Activated CD4-positive, alpha-beta T cell treated with anti-CD3 and anti-CD28 coated beads for 36 hours (primary cell): ENCODE measurements at regions of chr12 and their contacts with region 1.

Region 1: DNA sequence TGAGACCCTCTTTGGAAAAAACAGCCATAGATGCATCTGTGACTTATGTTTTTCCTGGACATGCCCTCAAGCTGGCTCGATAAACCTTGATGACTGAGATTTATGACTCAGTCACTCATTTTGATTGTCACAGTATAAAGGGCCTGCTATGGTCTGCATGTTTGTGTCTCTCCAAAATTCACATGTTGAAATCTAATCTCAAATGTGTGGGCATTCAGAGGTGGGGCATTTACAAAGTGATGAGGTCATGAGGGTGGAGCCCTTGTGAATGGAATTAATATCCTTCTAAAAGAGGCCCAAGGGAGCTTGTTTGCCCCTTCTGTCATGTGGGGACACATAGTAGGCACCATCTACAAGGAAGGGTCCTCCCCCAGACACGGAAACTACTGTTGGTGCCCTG is 372.9 kb downstream of the APAF1 start:
- DNase-seq: no peak
- ATAC-seq: no peak
- H3K4me3 Mint-ChIP-seq: no peak overlapping the region
- H3K27ac Mint-ChIP-seq: no peak overlapping the region
- H3K4me1 Mint-ChIP-seq: no peaks in the 10 kb centered on the region
- H3K27me3 Mint-ChIP-seq: peaks cover 5% of the 10 kb centered on the region

Region 2: DNA sequence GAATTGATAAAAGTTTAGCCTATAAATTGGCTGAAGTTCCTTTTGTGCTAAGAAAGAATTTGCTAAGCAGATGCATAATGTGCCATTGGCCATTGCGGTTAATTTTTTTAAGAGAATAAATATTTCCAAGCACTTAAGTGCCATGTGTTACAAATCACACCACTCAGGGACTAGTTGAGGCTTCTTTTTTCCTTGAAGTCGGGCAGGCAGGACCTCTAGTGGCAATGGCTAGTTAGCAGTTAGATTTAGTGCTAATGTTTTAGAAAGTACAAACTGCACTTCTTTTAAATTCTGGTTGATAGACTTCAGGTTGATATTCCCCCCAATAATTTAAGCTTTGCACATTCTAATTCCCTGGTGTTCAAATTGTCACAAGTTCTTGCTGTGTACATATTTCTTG is 78.6 kb before region 1 on chr12:
- CTCF ChIA-PET with region 1: no interaction called
- POLR2A ChIA-PET with region 1: no interaction called
- intact Hi-C with region 1: no loop called
- DNase-seq: peak; percentile 23
- ATAC-seq: no peak
- H3K4me3 Mint-ChIP-seq: no peak overlapping the region
- H3K27ac Mint-ChIP-seq: no peak overlapping the region
- H3K4me1 Mint-ChIP-seq: no peaks in the 10 kb centered on the region
- H3K27me3 Mint-ChIP-seq: peaks cover 12% of the 10 kb centered on the region

Region 3: DNA sequence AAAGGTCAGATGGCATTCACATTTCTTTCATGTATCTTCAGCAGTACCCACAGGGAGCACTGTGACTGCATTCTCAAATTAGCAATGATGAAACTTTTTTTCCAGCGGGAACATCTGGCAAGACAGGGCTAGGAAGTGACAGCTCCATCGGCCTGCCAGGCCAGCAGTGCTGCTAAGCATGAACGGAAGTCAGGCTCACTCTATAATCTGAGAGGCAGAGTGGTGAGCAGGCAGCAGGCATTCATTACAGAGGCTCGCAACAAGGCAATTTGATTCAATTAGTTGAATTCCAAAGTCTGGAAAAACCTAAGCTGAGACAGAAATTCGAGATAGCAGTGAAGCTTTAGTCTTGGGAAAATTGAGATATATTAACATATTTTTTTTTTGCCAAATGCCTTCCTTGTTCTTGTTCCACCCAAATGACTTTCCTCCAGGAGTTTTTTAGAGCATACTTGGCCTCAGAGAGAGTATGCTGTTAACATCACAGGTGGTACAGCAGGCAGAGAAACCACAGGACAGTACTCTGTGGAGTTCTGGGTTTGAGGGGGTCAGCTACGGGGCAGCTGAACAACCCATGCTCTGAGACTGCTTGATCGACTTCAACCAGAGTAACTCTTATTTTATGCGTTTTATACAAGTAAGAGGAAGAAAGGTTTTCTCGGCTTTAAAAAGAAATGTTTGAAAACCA is 42.0 kb after region 1 on chr12:
- CTCF ChIA-PET with region 1: no interaction called
- POLR2A ChIA-PET with region 1: no interaction called
- intact Hi-C with region 1: no loop called
- DNase-seq: no peak
- ATAC-seq: no peak
- H3K4me3 Mint-ChIP-seq: no peak overlapping the region
- H3K27ac Mint-ChIP-seq: no peak overlapping the region
- H3K4me1 Mint-ChIP-seq: no peaks in the 10 kb centered on the region
- H3K27me3 Mint-ChIP-seq: peaks cover 3% of the 10 kb centered on the region

Region 4: DNA sequence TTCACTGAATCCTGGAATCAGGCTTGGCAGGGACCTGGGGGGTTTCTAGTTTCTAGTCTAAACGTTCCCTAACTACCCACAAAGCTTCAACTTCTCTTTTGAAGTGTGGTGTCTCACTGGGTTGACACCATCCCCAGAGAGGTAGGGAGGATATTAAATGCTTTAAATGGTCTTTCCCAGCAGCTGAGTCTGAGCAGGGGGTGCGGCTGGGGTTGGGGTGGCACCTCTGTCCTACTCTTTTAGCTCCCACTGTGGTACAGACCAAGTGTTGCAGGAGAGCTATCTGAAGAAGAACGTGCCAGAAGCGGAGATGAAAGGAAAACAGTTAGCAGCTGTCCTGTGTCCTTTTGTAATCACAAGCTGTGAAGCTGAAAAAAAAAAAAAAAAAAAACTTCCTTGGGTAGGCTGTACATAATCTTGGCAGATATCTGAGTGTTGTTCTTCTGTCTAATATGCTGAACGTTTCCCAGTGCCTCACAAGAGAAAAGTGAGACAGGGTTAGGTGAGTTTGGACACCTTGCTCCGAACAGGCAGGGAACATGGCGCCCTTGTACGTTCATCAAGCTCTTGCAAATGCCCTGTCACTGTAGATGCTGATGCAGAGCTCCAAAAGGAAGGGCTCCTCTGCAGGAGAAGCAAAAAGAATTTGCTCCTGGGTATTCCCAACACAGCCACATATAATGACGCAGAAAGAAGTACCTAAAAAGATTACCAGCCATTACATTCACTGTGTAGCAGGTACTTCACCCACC is 74.3 kb after region 1 on chr12:
- CTCF ChIA-PET with region 1: no interaction called
- POLR2A ChIA-PET with region 1: no interaction called
- intact Hi-C with region 1: loop called in 1 of 2 experiments (anchors 2 kb)
- DNase-seq: no peak
- ATAC-seq: no peak
- H3K4me3 Mint-ChIP-seq: no peak overlapping the region
- H3K27ac Mint-ChIP-seq: no peak overlapping the region
- H3K4me1 Mint-ChIP-seq: no peaks in the 10 kb centered on the region
- H3K27me3 Mint-ChIP-seq: peaks cover 2% of the 10 kb centered on the region